B cell (primary cell): ENCODE measurements at regions of chr4 and their contacts with region 1.

Region 1: DNA sequence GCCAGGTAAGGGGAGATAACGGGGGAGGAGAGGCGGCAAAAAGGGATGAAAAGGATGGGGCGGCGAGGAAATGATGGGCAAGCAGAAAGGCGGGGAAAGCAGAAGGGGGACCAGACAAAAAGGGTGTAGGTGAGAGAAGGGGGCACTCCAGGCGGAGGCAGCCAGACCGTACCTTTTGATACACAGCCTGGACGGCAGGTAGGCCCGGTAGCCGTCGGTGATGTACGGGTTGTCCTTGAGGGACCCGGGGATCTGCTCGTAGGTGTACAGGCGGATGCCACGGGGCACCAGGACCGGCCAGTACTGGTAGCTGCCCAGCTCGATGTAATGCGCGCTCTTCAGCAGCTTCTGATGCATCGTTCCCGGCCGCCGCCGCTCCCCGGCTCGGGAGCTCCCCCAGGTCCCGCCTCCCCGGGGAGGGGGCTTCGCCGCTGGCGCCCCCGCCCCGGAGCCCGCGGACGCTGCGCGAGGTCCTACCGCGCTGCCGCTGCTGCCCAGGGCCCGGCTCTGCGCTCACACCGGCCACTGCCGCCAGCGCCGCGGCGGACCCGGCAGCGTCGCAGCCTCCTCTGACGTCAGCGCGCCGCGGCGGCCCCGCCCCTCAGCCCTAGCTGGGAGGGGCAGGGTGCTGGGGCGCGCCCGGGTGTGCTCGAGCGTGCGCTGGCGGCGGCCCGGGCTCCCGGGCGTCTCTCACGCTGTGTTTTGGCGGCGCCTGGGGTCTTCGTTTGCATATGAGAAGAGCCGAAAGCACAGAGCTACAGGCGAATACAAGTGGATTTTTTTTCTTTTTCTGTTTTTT is at the start of gene PAQR3:
- DNase-seq: peak; percentile 91
- ATAC-seq: peak; percentile 98
- H3K4me3 ChIP-seq: peak within 1 kb of the TSS; percentile 74 to 88 (median 85)
- H3K4me3 Mint-ChIP-seq: peak within 1 kb of the TSS; percentile 91
- H3K27ac ChIP-seq: peak within 1 kb of the TSS; percentile 45 to 75
- H3K27ac Mint-ChIP-seq: peak within 1 kb of the TSS; percentile 79
- H3K4me1 ChIP-seq: peaks cover 12 to 20% of the 10 kb centered on the region in 2 donors
- H3K4me1 Mint-ChIP-seq: peaks cover 26% of the 10 kb centered on the region
- H3K27me3 ChIP-seq: no peaks in the 10 kb centered on the region
- H3K27me3 Mint-ChIP-seq: peaks cover 3% of the 10 kb centered on the region
- CTCF ChIP-seq: no peak
- total RNA-seq, gene PAQR3: 12.6 and 13.5 TPM in 2 replicates

Region 2: DNA sequence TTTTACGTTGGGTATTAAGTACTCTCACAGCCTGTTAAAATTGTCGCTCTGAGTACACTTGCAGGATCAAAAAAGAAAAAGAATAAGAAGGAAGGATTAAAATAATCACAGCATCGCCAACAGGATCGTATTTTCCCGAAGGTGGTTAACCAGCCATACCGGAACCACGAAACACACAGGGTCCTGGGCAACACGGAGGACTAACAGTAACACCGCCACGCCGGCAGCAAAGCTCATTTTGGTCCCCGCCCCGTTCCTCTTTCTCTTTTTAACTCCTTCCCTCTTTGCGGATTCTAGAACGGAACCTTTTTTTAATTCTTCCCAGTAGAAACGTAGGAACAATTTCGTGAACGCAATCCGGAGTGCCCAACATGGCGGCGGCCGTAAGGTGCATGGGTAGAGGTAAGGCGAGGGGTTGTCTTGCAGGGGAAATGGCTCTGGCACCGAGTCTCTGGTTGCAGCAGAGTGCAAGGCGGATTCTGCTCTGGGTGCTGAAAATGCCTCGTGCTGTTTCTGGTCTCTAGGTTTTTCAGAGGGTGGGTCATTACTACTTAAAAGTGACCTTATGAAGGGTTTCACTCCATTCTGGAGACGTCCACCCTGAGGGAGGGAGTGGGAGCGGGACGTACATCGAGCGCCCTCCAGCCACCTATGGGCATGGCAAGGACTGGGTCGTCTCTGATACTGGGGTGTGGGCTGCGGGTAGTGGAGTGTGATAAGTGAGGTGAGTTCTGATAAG is 1076.4 kb before region 1 on chr4 and contains the start of gene MRPL1:
- CTCF ChIA-PET with region 1: no interaction called
- POLR2A ChIA-PET with region 1: interaction called, 3 read pairs
- intact Hi-C with region 1: loop called (anchors 1 kb)
- DNase-seq: peak; percentile 95
- ATAC-seq: peak; percentile 86
- H3K4me3 ChIP-seq: peak within 1 kb of the TSS; percentile 68 to 98 (median 80)
- H3K4me3 Mint-ChIP-seq: peak within 1 kb of the TSS; percentile 99
- H3K27ac ChIP-seq: peak within 1 kb of the TSS; percentile 99 to 100
- H3K27ac Mint-ChIP-seq: peak within 1 kb of the TSS; percentile 98
- H3K4me1 ChIP-seq: peaks cover 17 to 21% of the 10 kb centered on the region in 2 donors
- H3K4me1 Mint-ChIP-seq: peaks cover 41% of the 10 kb centered on the region
- H3K27me3 ChIP-seq: no peaks in the 10 kb centered on the region
- H3K27me3 Mint-ChIP-seq: no peaks in the 10 kb centered on the region
- CTCF ChIP-seq: no peak
- total RNA-seq, gene MRPL1: 22.7 and 23.3 TPM in 2 replicates